Sciatic nerve (tissue), 2 donors: ENCODE measurements at regions of chr12 and their contacts with region 1.

Region 1: DNA sequence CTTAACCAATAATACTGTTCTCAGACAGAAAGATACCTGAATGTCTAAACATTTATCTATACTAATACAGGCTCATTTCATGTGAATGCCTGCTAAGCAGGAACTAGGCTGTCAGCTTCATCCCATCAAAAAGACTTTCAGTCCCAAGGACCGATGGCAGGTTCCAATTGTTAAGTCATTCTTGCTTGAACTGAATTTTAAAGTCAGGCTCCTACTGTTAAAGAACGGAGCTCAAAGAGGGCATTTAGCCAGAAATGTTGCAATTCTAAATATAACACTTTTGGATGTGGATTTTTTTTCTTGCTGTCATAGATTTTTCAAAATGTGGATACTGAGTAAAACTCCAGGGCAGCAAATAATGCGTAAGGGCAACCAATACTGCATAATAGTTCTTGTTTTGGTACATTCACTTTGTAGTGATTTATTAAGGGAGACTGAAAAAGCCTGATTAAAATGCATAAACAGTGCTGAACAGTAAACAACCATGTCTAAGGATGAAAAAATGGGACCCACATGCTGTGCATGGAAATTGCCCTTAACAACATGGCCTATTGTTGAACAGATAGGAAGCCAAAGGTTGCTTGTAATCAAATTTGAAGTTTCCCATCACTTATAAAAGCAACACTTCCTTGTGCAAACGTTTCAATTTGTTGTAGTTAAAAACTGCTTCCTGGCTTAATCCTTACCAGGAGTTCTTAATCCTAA is 38.7 kb upstream of the DBX2 start:
- DNase-seq: no peak
- ATAC-seq: peak; percentile 71

Region 2: DNA sequence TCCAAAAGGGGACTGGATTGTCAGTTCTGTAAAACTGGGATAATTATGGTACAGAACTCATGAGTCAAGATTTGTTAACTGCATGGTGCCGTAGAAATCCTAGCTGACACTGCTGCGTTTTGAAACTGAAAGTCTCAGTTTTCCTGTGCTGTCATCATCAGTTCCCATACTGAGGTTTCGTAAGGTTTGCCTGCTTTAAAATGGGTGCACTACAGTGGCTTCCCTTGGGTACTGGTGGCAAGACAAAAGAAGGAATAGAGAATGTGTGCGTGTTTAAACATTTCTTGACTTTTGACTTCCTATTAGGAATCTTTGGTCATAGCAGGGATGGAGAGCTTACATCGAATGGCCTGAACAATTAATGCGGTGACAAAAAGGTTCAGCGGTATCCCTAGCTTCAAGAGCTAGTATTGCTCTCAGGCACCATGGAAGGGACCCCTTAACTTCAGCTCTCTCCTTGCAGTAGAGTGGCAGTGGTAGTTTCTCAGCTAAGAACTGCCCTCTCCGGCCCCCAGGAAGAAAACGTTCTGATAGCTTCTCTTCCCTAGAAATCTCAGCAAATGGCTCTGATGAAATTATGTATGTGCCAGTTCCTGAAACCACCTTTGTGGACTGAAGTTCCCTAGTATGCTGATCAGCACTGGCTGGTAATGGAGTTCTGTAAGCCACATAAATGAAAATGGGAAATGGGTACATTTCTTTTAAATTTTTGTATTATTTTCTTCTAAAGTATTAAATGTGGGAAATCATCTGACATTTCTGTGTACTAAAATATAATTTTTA is 155.2 kb after region 1 on chr12:
- intact Hi-C with region 1: loop called (anchors 5 kb)
- DNase-seq: no peak
- ATAC-seq: peak; percentile 68